GM18951 (cell line): ENCODE measurements at regions of chr1 and their contacts with region 1.

Region 1: DNA sequence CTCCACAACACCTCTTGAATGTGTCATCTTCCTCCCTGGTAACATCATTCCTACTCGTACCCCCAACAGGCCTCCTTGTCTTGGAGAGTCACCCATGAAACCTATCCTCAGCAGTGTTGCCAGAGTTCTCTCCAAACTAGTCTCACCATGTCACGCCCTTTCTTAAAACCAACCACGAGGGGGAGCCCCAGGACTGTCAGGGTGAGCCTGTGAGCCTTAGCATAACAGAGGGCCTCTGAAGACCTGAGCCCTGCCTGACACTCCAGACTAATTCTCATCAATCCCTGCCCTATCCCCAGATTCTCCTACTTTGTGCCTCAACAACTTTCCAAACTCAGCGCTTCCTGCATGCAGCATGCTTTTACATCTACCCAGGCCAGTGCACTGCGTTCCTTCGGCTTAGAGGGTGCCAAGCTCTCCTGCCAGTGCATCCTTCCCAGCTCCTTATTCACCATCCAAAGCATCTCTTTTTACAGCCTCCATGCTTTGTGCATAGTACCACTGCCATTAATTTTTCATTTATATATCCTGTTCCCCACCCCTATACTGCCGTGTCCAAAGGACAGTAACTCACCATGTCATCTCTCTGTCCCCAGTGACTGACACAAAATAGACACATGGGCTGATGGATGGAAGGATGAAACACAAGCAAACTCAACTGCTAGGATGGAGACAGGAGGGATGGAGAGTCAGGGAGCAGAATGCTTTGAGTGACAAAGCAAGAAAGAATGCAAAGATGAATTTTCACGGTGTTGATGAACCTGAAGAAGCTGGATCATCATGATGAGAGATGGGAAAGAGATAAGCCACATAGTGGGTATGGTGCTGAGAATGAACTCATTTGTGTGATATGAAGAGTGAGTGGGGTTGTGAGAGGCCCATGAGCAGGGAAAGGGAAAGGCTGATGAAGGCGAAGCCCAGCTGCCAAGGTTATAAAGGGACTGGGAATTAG is 34.0 kb downstream of the ZNF697 start:
- POLR2A ChIP-seq: no peak

Region 2: DNA sequence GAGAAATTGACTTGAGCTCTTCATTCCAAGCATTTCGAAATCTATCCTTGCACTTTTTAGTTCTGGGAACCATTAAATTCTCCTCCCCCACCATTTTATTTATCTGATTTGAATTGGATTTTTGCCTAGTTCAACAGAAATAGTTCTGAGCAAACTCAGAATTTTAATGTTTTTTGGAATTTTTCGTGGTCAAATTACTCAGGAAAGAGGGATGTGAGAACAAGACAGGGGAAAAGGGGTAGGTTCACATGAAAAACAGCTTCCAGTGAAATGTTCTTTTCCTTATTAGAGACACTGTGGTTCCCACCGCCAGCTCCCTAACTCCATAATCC is 39.8 kb after region 1 on chr1:
- in situ Hi-C with region 1: loop called (anchors 5 kb)
- POLR2A ChIP-seq: no peak

Region 3: DNA sequence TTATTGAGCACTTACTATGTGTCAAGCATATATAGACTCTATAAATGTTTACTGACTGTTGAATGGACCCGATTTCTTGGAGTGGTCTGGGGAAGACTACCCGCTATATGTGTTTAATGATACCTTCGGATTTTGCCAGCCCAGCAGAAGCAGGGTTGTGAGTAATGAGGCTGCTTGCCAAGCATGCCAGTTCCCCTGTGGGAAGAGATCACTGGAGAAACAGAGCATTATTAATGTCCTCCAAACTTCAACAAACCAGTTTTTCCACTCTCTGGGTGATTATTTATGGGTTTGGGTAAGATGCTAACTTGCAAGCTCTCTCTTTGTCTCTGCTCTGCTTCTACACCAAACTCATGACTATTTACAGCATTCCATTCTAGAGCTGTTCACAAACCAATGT is 72.6 kb after region 1 on chr1:
- in situ Hi-C with region 1: loop called (anchors 5 kb)
- POLR2A ChIP-seq: no peak